Aorta (tissue), 5 donors: ENCODE measurements at regions of chr4 and their contacts with region 1.

Region 1: GRCh38 chr4:41214136-41214824 is at the start of gene APBB2:
- DNase-seq: peak; percentile 96 to 97
- ATAC-seq: peak; percentile 94
- H3K4me3 ChIP-seq: peak within 1 kb of the TSS; percentile 71 to 92
- H3K27ac ChIP-seq: peak within 1 kb of the TSS; percentile 51 to 73
- H3K4me1 ChIP-seq: no peaks in the 10 kb centered on the region
- H3K27me3 ChIP-seq: no peaks in the 10 kb centered on the region
- total RNA-seq, gene APBB2: 99.8 to 101 TPM

Region 2: GRCh38 chr4:40749717-40750460 is 464.4 kb before region 1 on chr4 and contains the start of gene NSUN7:
- intact Hi-C with region 1: loop called in 1 of 2 experiments (anchors 10 kb)
- DNase-seq: peak; percentile 78 to 87
- ATAC-seq: peak; percentile 87
- H3K4me3 ChIP-seq: peak within 1 kb of the TSS; percentile 43 to 94
- H3K27ac ChIP-seq: peak within 1 kb of the TSS in 1 of 2 donors; percentile 41
- H3K4me1 ChIP-seq: no peaks in the 10 kb centered on the region
- H3K27me3 ChIP-seq: no peaks in the 10 kb centered on the region
- total RNA-seq, gene NSUN7: 6.8 to 16.3 TPM

Region 3: GRCh38 chr4:40908702-40909362 is 305.4 kb before region 1 on chr4:
- intact Hi-C with region 1: loop called in 1 of 2 experiments (anchors 5 kb)
- DNase-seq: peak; percentile 84 to 88
- ATAC-seq: peak; percentile 90
- H3K4me3 ChIP-seq: no peak overlapping the region
- H3K27ac ChIP-seq: peak overlapping the region; percentile 62 to 97
- H3K4me1 ChIP-seq: peaks cover 0 to 3% of the 10 kb centered on the region in 2 donors
- H3K27me3 ChIP-seq: peaks cover 0 to 1% of the 10 kb centered on the region in 2 donors

Region 4: DNA sequence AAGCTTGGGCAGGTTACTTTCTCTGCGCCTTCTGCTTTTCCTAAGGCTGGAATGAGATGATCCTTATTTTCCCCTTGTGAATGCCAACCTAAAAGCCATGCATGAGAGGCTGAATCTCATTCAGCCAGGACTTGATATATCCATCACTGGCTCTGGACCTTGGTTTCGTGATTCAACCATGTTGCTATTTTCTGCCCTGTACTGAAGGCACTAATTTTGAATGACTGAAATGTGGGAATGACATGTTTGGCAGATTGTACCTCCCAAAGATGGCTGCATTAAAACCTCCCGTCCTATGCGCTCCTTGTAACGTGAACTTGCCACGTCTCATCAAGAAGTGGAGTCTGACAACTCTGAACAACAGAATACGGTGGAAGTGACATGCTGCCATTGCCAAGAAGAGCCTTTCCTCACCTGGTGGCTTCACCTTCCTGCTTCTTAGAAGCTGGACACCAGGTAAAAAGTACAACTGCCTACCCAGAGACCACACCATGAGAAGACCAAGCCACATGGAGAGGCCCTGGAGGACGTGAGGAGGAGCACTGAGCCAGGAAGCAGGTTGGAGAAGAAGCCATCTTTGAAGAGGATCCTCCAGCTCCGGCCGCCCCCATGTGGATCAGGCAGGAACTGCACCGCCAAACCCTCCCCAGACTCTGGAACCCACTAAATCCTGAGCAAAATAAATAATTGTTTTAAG is 290.0 kb before region 1 on chr4:
- intact Hi-C with region 1: loop called (anchors 2 kb)
- DNase-seq: peak; percentile 78 to 93
- ATAC-seq: peak; percentile 74
- H3K4me3 ChIP-seq: no peak overlapping the region
- H3K27ac ChIP-seq: peak overlapping the region; percentile 73 to 90
- H3K4me1 ChIP-seq: peaks cover 0 to 8% of the 10 kb centered on the region in 2 donors
- H3K27me3 ChIP-seq: no peaks in the 10 kb centered on the region

Region 5: GRCh38 chr4:40976343-40976742 is 237.9 kb before region 1 on chr4:
- intact Hi-C with region 1: loop called (anchors 2 kb)
- DNase-seq: no peak
- ATAC-seq: no peak
- H3K4me3 ChIP-seq: no peak overlapping the region
- H3K27ac ChIP-seq: no peak overlapping the region
- H3K4me1 ChIP-seq: no peaks in the 10 kb centered on the region
- H3K27me3 ChIP-seq: no peaks in the 10 kb centered on the region

Region 6: GRCh38 chr4:41143311-41144039 is 70.8 kb before region 1 on chr4:
- intact Hi-C with region 1: loop called (anchors 5 kb)
- DNase-seq: peak in 1 of 2 donors; percentile 63
- ATAC-seq: peak; percentile 82
- H3K4me3 ChIP-seq: peak overlapping the region in 1 of 2 donors; percentile 33
- H3K27ac ChIP-seq: peak overlapping the region; percentile 89 to 99
- H3K4me1 ChIP-seq: peaks cover 17 to 27% of the 10 kb centered on the region in 2 donors
- H3K27me3 ChIP-seq: no peaks in the 10 kb centered on the region

Region 7: DNA sequence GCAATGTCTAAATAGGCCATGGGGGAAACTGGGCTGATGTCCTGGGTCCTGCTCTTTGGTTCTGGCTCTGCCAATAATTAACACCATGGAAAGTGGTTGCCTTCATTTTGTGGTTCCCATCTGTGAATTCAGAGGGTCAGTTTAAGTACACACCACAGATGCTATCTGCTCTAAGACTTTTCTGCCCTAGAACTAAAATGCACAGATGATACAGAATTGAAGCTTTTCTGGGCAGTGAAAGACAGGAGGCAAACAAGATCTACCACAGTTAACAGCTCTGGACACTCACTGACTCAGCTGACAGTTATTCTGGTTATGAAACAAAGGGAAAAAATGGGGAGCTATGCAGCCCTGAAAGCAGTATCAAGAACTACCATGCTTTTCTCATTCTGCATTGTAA is 37.3 kb before region 1 on chr4:
- intact Hi-C with region 1: loop called in 1 of 2 experiments (anchors 5 kb)
- DNase-seq: no peak
- ATAC-seq: no peak
- H3K4me3 ChIP-seq: no peak overlapping the region
- H3K27ac ChIP-seq: peak overlapping the region in 1 of 2 donors; percentile 40
- H3K4me1 ChIP-seq: peaks cover 8 to 9% of the 10 kb centered on the region in 2 donors
- H3K27me3 ChIP-seq: no peaks in the 10 kb centered on the region